Cardiac septum (tissue), 1 donor: ENCODE measurements at regions of chr1 and their contacts with region 1.

Region 1: DNA sequence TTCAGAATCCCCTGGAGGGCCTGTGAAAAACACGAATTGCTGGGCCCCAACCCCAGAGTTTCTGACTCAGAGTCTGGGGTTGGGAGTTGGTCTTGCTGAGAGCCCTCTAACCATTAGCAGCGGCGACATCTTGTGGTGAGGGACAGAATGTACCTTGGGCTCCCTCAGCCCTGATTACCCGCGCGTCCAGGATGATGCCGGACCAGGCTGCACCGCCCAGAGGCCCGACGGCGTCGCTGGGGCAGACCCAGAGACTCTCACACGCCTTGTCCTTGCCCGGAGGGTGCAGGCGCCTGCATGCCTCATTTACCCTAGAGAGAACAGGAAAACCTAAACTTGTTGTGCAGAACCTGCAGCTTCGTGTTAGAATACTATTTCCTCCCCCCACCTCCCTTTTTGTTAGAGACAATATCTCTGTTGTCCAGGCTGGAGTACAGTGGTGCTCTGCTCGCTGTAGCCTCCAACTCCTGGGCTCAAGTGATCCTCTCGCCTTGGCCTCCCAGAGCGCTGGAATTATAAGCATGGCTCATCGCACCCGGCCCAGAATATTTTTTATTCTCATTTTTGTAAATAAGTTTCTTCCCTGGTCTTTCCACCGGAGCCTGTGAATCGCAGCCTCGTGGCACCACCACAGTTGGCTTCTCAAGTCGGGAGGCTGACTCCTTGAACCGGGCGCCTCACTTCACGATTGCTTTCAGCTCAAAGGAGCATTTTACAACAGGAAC is 22.2 kb upstream of the RD3 start:
- DNase-seq: peak; percentile 87

Region 2: DNA sequence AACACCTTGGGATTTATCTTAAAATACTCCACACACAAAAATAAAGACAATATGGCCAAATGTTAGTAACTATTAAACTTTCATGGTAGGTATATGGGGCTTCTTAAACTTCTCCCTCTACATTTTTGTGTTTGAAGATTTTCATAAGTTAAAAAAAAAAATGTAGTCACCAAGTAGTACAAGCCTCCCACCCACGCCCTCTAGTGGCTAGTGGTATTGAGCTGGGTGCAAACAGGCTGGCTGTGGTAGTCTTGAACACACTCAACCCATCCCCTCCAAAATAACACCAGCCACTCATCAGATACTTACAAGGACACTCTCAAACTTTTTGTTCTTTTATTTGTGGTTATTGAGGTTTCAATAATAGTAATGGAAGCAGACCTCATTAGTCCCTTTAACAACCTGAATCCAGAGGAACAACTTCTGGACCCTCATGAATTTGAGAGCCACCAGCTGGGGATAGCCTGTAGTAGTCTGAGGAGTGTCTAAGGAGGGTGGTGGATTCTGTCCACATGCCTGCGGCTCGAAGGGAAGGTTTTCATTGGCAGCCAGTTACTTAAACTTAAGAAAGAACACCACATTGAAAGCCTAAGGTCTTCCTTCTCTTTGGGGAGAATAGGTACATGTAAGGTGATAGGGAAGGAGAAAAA is 37.9 kb before region 1 on chr1:
- intact Hi-C with region 1: loop called (anchors 2 kb)
- DNase-seq: peak; percentile 77

Region 3: DNA sequence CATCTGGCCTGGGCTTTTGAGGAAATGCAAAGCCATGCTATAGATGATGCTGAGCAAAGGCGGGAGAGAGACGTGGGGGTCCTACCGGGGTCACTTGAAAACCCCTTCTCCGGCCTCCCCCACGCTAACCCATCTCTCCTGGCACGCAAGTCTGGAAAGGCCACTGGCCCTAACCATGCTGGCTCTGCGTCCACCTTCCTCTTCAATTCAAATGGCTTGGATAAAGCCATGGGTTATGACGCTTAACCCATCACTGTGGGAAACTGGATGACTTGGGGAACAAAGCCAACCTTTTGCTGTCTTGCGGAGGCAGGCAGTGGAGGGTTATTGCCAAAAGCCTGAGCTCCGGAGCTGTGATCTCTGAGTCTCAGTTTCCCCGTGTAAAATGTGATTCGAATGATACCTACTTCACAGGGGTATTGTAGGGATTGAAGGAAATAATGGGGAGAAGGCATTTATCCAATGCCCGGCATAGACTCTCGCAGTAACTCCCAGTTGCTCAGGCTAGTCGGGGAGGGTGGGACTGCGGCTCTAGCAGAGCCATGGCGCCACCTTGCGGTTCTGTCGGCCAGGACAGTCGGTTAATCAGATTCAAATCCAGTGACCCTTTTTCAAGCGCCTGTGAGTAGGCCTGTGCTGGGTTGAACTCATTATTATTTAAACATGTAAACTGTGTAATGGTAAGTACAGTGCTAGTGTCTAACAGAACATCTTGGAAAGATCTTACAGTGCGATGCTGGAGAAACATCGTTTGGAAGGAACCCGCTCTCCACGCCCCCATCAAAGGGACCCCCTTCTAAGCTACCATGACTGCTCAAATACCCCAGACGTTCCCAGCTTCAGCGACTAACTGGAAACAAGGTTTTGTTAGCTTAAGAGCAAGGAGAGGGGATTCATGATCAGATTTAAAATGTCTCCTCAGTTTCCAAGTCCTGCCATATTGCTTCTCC is 140.9 kb after region 1 on chr1:
- intact Hi-C with region 1: loop called (anchors 2 kb)
- DNase-seq: peak; percentile 92

Region 4: DNA sequence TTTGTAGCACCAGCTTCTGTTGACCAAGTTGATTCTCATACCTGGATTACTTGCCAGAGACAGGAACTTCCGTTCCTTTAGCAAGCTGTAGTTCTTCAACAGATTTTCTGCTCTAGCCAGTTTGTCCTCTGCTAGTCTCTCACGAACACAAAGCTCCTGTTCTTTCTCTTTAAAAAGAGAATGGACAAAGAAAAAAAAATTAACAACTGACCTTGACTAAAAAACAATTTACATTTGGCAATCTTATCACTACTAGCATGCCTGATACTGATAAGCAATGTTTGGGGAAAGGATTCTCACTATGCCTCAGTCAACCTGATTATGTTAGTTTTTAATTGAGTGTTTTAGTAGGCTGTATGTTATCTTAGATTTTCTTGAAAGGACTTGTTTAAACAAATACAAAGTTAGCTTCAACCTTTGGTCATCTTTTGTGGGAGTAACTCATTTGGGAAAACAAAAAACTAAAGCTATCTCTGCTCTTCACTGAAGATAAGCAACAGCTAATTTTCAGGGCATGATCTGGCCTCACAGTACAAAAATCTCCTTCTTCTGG is 152.9 kb after region 1 on chr1:
- intact Hi-C with region 1: no loop called
- DNase-seq: no peak